ENCODE measurements at regions of chr11 and their contacts with region 1.

Region 1: DNA sequence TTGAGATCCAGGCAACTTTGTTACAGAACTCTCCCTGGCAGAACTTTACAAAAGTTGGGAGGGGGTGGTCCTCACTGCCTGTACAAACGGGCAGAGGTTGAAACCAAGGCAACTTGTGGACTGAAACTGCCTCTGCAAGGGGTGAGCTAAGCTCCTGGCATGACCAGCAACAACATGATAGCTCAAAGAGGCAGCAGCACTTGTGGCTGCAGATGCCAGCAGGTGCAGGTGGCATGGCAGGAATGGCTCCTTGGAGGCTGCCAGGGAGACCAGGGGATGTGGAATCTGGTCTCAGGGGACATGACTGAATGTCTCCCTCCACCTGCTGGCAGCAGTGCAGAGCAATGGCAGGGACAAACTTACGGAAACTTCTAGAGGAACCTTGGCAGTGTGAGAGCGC is 38.8 kb upstream of the PHF21A start:
- DNase-seq: peak in 1 of 2 experiments; percentile 24
- H3K4me3 ChIP-seq: no peak overlapping the region
- H3K4me3 Mint-ChIP-seq: no peak overlapping the region
- H3K27ac Mint-ChIP-seq: no peak overlapping the region
- H3K4me1 ChIP-seq: peaks cover 23% of the 10 kb centered on the region
- H3K4me1 Mint-ChIP-seq: peaks cover 17% of the 10 kb centered on the region
- H3K27me3 ChIP-seq: no peaks in the 10 kb centered on the region
- H3K27me3 Mint-ChIP-seq: peaks cover 12% of the 10 kb centered on the region
- CTCF ChIP-seq: peak in 1 of 2 experiments; percentile 19

Region 2: DNA sequence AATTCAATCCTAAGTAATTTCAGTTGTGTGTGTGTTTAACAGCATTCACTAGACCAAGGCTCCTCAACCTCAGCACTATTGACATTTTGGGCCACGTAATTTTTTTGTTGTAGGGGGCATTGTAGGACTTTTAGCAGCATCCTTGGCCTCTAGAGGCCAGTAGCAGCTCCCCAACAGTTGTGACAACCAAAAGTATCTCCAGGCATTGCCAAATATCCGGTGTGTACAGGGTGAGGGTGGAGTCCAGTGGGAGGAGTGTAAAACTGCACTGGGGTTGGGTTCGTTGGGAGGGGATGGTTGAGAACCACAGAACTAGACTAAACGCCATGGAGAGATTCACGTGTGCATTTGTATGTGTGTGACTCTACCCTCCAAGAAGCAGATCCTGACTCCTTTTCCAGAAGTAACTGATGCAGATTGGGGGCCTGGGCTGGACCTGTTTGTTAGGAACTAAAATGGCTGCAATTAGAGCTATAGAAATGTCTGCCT is 32.9 kb before region 1 on chr11:
- CTCF ChIA-PET with region 1: interaction called, 3 read pairs
- POLR2A ChIA-PET with region 1: no interaction called
- intact Hi-C with region 1: loop called (anchors 1 kb)
- DNase-seq: peak; percentile 74 to 77
- H3K4me3 ChIP-seq: no peak overlapping the region
- H3K4me3 Mint-ChIP-seq: peak overlapping the region; percentile 59
- H3K27ac Mint-ChIP-seq: no peak overlapping the region
- H3K4me1 ChIP-seq: peaks cover 18% of the 10 kb centered on the region
- H3K4me1 Mint-ChIP-seq: peaks cover 14% of the 10 kb centered on the region
- H3K27me3 ChIP-seq: no peaks in the 10 kb centered on the region
- H3K27me3 Mint-ChIP-seq: no peaks in the 10 kb centered on the region
- CTCF ChIP-seq: peak; percentile 45 to 52

Measured in Caco-2 (cell line).